Endothelial cell of umbilical vein (primary cell): ENCODE measurements at regions of chr7 and their contacts with region 1.

Region 1: DNA sequence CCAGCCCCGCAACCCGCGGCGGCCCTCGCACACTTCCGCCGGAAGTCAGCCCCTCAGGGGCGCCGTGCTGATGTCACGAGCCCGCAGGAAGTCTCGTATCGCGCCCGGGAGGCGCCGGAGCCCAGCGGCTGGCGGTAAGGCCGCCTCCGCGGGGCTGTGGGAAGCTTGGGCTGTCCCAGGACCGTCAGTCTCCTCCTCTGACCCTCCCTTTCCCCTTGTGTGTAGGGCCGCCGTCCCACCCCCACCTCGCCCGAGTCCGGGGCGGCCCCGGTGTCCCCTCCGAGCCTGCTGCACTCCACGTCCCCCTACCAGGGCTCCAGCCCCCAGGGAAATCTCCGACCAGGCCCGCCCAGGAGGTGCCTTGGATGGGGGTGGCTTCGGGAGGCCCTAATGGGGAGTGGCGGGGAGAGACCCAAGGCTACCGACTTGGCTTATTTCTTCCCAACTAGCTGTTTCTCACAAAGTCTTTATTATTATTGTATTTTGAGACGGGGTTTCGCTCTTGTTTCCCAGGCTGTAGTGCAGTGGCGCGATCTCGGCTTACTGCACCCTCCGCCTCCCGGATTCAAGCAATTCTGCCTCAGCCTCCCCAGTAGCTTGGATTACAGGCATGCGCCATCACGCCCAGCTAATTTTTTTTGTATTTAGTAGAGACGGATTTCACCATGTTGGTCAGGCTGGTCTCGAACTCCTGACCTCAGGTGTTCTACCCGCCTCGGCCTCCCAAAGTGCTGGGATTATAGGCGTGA is at the start of gene ZDHHC4:
- DNase-seq: peak; percentile 83
- H3K4me3 ChIP-seq: peak within 1 kb of the TSS; percentile 73 to 91 (median 87)
- H3K27ac ChIP-seq: peak within 1 kb of the TSS; percentile 96
- H3K4me1 ChIP-seq: no peaks in the 10 kb centered on the region
- H3K27me3 ChIP-seq: no peaks in the 10 kb centered on the region
- CTCF ChIP-seq: no peak
- POLR2A ChIP-seq: peak; percentile 97
- total RNA-seq, gene ZDHHC4: 29.9 and 31.3 TPM in 2 replicates

Region 2: GRCh38 chr7:6516387-6516983 is 61.1 kb before region 1 on chr7:
- CTCF ChIA-PET with region 1: interaction called, 19 read pairs
- POLR2A ChIA-PET with region 1: no interaction called
- dilution Hi-C with region 1: no loop called
- intact Hi-C with region 1: loop called (anchors 1 kb)
- DNase-seq: peak; percentile 71
- H3K4me3 ChIP-seq: no peak overlapping the region
- H3K27ac ChIP-seq: no peak overlapping the region
- H3K4me1 ChIP-seq: no peaks in the 10 kb centered on the region
- H3K27me3 ChIP-seq: no peaks in the 10 kb centered on the region
- CTCF ChIP-seq: peak; percentile 77 to 87
- POLR2A ChIP-seq: no peak

Region 3: DNA sequence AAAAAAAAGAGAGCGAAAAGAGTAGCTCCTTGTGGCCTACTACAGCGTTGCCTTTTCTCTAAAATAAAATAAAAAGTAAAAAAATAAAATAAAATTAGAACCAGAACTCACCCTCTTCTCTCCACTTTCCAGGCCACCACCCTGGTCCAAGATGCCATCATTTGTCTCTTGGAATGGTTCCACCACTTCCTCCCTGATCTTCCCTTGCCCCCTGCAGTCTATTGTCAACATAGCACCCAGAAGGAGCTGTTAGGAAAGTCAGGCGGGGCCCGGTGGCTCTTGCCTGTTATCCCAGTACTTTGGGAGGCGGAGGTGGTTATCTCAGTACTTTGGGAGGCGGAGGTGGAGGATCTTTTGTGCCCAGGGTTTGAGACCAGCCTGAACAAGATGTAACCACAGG is 18.7 kb before region 1 on chr7:
- CTCF ChIA-PET with region 1: interaction called, 20 read pairs
- POLR2A ChIA-PET with region 1: no interaction called
- dilution Hi-C with region 1: no loop called
- intact Hi-C with region 1: no loop called
- DNase-seq: no peak
- H3K4me3 ChIP-seq: no peak overlapping the region
- H3K27ac ChIP-seq: no peak overlapping the region
- H3K4me1 ChIP-seq: no peaks in the 10 kb centered on the region
- H3K27me3 ChIP-seq: no peaks in the 10 kb centered on the region
- CTCF ChIP-seq: peak in 1 of 2 donors; percentile 8
- POLR2A ChIP-seq: no peak

Region 4: DNA sequence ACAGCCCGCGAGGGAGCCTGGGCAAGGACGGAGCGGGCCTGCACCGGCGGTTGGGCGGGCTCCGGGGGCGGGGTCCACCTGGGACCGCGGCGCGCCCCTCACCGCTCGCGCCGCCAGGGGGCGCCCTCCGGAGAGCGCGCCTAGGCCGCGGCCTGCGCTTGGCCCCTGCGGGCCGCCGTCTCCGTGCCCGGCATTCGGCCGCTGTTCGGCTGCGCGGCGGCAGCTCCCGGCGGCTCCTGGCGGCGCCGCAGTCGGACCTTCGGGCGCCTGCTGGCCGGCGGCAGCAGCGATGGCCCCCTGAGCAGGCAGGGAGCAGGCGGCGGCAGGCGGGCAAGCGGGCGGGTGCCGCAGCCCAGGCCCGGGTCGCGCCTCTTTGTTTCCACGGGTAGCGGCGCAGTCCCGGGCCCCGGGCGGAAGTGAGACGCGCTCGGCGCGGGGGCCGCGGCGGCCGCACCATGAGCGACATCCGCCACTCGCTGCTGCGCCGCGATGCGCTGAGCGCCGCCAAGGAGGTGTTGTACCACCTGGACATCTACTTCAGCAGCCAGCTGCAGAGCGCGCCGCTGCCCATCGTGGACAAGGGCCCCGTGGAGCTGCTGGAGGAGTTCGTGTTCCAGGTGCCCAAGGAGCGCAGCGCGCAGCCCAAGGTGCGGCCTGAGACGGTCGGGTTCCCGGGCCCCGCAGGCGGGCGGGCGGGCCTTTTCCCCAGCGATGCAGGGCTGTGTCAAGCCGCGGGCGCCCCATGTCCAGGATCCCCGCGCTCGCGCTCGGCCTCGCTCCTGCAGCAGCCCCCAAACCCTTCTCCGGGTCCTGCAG is 12.5 kb after region 1 on chr7 and contains the start of gene INTS15:
- CTCF ChIA-PET with region 1: interaction called, 18 read pairs
- POLR2A ChIA-PET with region 1: interaction called, 5 read pairs
- dilution Hi-C with region 1: no loop called
- intact Hi-C with region 1: loop called (anchors 1 kb)
- DNase-seq: peak; percentile 70
- H3K4me3 ChIP-seq: peak within 1 kb of the TSS; percentile 66 to 96 (median 70)
- H3K27ac ChIP-seq: peak within 1 kb of the TSS; percentile 60
- H3K4me1 ChIP-seq: peaks cover 12% of the 10 kb centered on the region
- H3K27me3 ChIP-seq: no peaks in the 10 kb centered on the region
- CTCF ChIP-seq: peak; percentile 57 to 86
- POLR2A ChIP-seq: peak; percentile 94
- total RNA-seq, gene INTS15: 31.5 and 35.7 TPM in 2 replicates

Region 5: GRCh38 chr7:6706677-6707544 is 129.4 kb after region 1 on chr7 and contains the start of gene ZNF12:
- CTCF ChIA-PET with region 1: no interaction called
- POLR2A ChIA-PET with region 1: no interaction called
- dilution Hi-C with region 1: no loop called
- intact Hi-C with region 1: loop called (anchors 5 kb)
- DNase-seq: peak; percentile 93
- H3K4me3 ChIP-seq: peak within 1 kb of the TSS; percentile 69 to 76 (median 70)
- H3K27ac ChIP-seq: peak within 1 kb of the TSS; percentile 87
- H3K4me1 ChIP-seq: peaks cover 12% of the 10 kb centered on the region
- H3K27me3 ChIP-seq: no peaks in the 10 kb centered on the region
- CTCF ChIP-seq: no peak
- POLR2A ChIP-seq: peak; percentile 50
- total RNA-seq, gene ZNF12: 13.4 TPM in 2 replicates

Region 6: DNA sequence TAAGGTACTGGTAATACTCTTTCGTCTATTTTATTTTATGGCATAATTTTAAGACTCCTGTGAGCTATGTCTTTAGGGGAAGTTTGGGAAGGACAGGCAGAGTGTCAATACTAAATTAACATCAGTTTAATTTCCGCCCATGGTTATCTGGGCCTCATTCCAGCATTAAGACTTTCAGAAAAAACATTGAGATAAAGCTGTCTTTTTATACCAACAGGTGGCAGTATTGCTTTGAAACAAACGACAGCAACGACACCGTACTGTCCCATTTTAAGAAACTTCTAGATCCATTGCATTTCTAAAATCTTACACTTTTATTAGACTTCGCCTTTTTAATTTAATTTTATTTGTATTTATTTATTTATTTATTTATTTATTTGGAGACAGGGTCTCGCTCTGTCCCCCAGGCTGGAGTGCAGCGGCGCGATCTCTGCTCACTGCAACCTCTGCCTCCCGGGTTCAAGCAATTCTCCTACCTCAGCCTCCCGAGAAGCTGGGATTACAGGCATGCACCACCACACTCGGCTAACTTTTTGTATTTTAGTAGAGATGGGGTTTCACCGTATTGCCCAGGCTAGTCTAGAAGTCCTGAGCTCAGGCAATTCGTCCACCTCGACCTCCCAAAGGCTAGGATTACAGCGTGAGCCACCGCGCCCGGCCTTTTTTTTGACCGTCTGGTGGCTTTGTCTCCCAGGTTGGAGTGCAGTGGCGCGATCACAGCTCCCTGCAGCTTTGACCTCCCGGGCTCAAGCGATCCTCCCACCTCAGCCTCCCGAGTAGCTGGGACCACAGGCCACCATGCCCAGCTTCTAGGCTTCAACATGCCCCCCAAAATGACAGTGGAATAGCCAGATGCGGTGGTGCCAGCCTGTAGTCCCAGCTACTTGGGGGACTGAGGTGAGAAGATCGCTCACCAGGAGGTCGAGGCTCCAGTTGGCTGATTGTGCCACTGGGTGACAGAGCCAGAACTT is 526.1 kb after region 1 on chr7:
- CTCF ChIA-PET with region 1: no interaction called
- POLR2A ChIA-PET with region 1: no interaction called
- dilution Hi-C with region 1: no loop called
- intact Hi-C with region 1: no loop called
- DNase-seq: peak; percentile 70
- H3K4me3 ChIP-seq: peak overlapping the region in 1 of 3 experiments; percentile 8
- H3K27ac ChIP-seq: no peak overlapping the region
- H3K4me1 ChIP-seq: peaks cover 15% of the 10 kb centered on the region
- H3K27me3 ChIP-seq: no peaks in the 10 kb centered on the region
- CTCF ChIP-seq: peak; percentile 45 to 49
- POLR2A ChIP-seq: no peak

Region 7: GRCh38 chr7:7201578-7202374 is 624.2 kb after region 1 on chr7:
- CTCF ChIA-PET with region 1: no interaction called
- POLR2A ChIA-PET with region 1: no interaction called
- dilution Hi-C with region 1: no loop called
- intact Hi-C with region 1: no loop called
- DNase-seq: no peak
- H3K4me3 ChIP-seq: no peak overlapping the region
- H3K27ac ChIP-seq: no peak overlapping the region
- H3K4me1 ChIP-seq: no peaks in the 10 kb centered on the region
- H3K27me3 ChIP-seq: no peaks in the 10 kb centered on the region
- CTCF ChIP-seq: no peak
- POLR2A ChIP-seq: no peak